Mammary epithelial cell (primary cell): ENCODE measurements at regions of chr1 and their contacts with region 1.

Region 1: GRCh38 chr1:206651958-206652890 is 16.9 kb downstream of the DYRK3 start:
- DNase-seq: no peak
- H3K4me3 ChIP-seq: no peak overlapping the region
- H3K27ac ChIP-seq: no peak overlapping the region
- H3K4me1 ChIP-seq: peaks cover 16% of the 10 kb centered on the region
- H3K27me3 ChIP-seq: no peaks in the 10 kb centered on the region
- CTCF ChIP-seq: no peak

Region 2: DNA sequence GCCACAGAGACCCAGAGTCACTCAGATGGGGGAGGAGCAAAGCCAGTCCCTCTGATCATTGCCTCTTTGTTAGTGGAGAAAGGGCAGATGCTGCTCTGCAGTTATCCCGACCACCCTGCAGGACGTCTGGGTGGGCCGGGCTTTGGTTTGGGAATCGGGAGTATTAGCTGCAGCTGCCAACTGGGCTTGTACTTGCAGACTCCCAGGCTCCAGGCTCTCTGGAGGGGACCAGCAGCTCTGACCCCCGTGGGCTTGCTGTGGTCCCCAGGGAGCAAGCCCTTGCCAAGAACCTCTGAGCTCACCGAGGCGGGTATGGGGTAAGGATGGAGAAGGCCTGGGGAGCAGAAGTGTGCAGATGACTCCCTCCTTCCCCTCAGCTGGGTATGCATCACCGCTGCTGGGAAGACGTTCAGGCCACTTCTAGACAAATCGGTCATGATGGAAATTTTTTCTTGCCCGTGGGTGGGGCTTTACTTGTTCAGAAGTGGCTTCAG is 54.1 kb after region 1 on chr1:
- CTCF ChIA-PET with region 1: interaction called, 4 read pairs
- dilution Hi-C with region 1: loop called (anchors 5 kb)
- in situ Hi-C with region 1: no loop called
- intact Hi-C with region 1: no loop called
- DNase-seq: no peak
- H3K4me3 ChIP-seq: no peak overlapping the region
- H3K27ac ChIP-seq: no peak overlapping the region
- H3K4me1 ChIP-seq: peaks cover 39% of the 10 kb centered on the region
- H3K27me3 ChIP-seq: no peaks in the 10 kb centered on the region
- CTCF ChIP-seq: no peak

Region 3: GRCh38 chr1:206734499-206735142 is 82.4 kb after region 1 on chr1:
- CTCF ChIA-PET with region 1: no interaction called
- dilution Hi-C with region 1: no loop called
- in situ Hi-C with region 1: no loop called
- intact Hi-C with region 1: no loop called
- DNase-seq: no peak
- H3K4me3 ChIP-seq: no peak overlapping the region
- H3K27ac ChIP-seq: no peak overlapping the region
- H3K4me1 ChIP-seq: peaks cover 4% of the 10 kb centered on the region
- H3K27me3 ChIP-seq: no peaks in the 10 kb centered on the region
- CTCF ChIP-seq: peak; percentile 79 to 87